ENCODE measurements at regions of chr6 and their contacts with region 1.

Region 1: DNA sequence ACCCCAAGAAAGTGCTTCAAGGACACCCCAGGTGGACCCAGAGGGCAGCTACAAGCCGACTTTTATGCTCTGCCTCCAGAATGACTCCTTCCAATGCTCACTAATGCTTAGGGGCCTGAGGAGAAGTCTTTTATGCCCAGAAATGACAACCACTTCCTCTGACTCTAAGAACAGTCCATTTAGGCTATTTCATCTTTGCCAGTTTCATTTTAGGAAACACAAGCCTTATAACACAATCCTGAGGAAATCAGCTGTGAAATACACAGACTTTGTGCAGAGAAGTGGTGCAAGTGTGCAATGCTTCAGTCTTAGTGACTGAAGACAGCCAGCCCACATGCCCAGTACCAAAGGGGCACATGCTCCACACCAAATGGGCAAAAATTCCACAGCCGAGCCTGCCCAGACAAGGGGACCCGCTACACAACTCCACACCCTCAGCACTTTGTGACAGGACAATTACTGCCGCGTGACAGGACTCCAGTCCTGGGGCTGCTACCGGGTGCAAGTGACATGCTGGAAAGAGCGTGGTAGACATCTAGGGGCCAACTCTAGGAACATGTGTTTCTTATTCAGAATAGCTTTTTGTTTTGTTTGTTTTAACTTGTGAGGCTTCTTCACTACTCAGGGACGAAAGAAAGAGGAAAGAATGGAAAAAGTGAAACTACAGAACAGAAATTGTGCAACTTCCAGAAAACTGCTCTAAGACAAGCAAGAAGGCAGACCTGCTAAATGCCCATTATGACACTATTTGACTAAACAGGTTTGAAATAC is 28.2 kb upstream of the PLAGL1 start:
- DNase-seq: peak; percentile 50
- H3K4me3 Mint-ChIP-seq: peak overlapping the region; percentile 30
- H3K27ac Mint-ChIP-seq: no peak overlapping the region
- H3K4me1 Mint-ChIP-seq: peaks cover 14% of the 10 kb centered on the region
- H3K27me3 Mint-ChIP-seq: no peaks in the 10 kb centered on the region

Region 2: DNA sequence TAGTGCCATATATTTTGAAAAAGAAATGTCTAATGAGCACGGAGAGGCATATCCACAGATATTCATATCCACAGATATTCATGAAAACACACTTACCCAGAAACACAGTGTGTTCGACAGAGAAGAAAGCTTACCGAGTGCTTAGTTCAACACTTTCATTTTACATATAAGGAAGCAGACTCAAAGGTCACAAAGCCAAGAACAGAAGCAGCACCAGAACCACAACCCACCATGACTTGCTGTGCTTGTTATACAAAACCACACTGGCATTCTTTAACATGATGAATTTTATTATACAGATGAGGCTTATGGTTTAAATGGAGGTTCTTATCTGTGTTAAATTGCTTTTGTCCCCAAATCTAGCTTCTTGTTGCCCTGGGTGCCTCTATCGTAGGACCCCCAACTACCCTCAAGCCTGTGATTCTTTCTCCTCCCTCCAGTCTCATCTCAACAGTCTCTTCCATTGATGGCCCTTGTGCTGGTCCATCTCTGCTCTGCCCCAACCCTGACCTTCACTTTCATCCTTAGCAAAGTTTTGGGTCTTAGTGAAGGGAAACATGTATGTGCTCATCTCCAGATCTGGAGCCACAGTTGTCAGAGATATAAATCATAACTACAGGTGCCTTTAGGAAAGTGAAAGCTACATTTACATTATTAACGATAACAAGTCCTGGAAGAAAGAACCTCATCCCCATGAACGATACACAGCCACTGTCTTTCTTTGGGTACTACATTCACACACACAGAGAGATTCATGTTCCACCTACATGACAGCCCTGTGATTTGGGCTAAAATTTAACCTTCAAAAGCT is 19.1 kb after region 1 on chr6:
- CTCF ChIA-PET with region 1: no interaction called
- intact Hi-C with region 1: loop called (anchors 1 kb)
- DNase-seq: peak; percentile 70
- H3K4me3 Mint-ChIP-seq: peak overlapping the region; percentile 76
- H3K27ac Mint-ChIP-seq: peak overlapping the region; percentile 91
- H3K4me1 Mint-ChIP-seq: peaks cover 26% of the 10 kb centered on the region
- H3K27me3 Mint-ChIP-seq: no peaks in the 10 kb centered on the region